ENCODE measurements at regions of chr11 and their contacts with region 1.

Region 1: GRCh38 chr11:6362873-6363678 is 27.2 kb upstream of the SMPD1 start:
- DNase-seq: peak; percentile 54
- H3K4me3 ChIP-seq: no peak overlapping the region
- H3K27ac ChIP-seq: no peak overlapping the region
- H3K27me3 ChIP-seq: no peaks in the 10 kb centered on the region
- CTCF ChIP-seq: peak; percentile 98

Region 2: GRCh38 chr11:5891216-5891800 is 471.8 kb before region 1 on chr11:
- CTCF ChIA-PET with region 1: interaction called, 11 read pairs
- POLR2A ChIA-PET with region 1: no interaction called
- DNase-seq: no peak
- H3K4me3 ChIP-seq: no peak overlapping the region
- H3K27ac ChIP-seq: no peak overlapping the region
- H3K27me3 ChIP-seq: no peaks in the 10 kb centered on the region
- CTCF ChIP-seq: peak; percentile 52

Region 3: DNA sequence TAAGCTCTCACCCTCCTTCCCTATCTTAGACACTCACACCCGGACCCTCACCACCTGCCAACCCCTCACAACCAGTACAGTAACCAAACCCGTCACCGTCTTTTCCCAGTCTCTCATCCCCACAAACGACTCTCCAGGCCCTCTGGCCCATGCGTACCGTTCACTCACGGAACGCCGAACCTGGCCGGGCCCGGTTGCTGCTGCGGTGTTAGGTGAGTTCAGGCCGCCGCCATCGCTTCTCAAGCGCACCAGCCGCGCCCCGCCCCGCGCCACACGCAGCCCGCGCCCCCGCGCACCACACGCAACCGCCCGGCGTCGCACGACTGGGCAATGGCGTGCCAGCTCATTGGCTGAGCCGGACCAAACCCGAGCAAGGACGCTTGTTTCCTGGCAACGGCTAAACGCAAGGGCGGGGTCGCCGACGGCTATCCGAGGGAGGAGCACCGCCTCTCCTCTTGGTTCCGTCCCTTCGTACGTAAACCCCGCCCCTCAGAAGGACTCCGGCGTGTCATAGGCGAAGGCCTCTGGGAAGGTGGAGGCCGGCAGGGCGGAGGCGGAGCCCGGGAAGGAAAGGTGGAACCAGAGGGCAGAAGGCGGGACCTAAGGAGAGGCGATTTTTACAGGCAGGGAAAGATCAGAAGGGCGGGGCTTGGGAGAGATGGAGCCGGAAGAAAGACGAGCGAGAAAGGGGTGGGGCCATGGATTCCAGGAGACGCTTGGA is 128.5 kb before region 1 on chr11 and contains the start of gene FHIP1B:
- CTCF ChIA-PET with region 1: interaction called, 24 read pairs
- POLR2A ChIA-PET with region 1: no interaction called
- DNase-seq: peak; percentile 100
- H3K4me3 ChIP-seq: peak within 1 kb of the TSS; percentile 99
- H3K27ac ChIP-seq: peak within 1 kb of the TSS; percentile 52
- H3K27me3 ChIP-seq: peaks cover 3% of the 10 kb centered on the region
- CTCF ChIP-seq: no peak
- polyA plus RNA-seq, gene FHIP1B: 18.9 and 19.8 TPM in 2 replicates

Region 4: DNA sequence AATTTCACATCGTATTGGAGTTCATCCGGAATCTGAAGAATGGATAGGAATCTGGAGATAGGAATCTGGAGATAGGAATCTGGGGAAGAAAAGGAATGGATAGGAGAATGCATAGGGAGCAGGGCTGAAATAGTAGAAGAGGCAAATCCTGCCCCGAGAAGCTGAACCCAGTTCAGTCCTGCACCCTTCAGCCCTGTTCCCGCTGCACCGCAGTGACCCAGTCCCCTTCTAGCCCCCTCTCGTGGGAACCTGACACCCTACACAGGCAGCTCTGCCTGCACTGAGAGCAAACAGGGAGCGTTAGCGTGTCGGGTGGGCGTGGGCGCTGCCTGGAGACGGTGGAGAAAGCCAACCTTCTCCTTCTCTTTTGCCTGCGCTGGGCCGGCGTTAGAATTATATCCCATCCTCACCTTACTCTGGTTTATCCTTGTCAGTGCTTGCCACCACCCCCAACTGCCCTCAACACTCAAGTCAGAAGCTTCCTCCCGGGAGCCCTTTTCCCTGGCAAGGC is 104.5 kb before region 1 on chr11:
- CTCF ChIA-PET with region 1: interaction called, 153 read pairs
- POLR2A ChIA-PET with region 1: no interaction called
- DNase-seq: no peak
- H3K4me3 ChIP-seq: no peak overlapping the region; the same call in 1 of the 2 replicates
- H3K27ac ChIP-seq: no peak overlapping the region
- H3K27me3 ChIP-seq: peaks cover 50% of the 10 kb centered on the region
- CTCF ChIP-seq: no peak

Region 5: GRCh38 chr11:6315811-6316425 is 47.2 kb before region 1 on chr11:
- CTCF ChIA-PET with region 1: interaction called, 137 read pairs
- POLR2A ChIA-PET with region 1: interaction called, 8 read pairs
- DNase-seq: no peak
- H3K4me3 ChIP-seq: no peak overlapping the region
- H3K27ac ChIP-seq: no peak overlapping the region
- H3K27me3 ChIP-seq: no peaks in the 10 kb centered on the region
- CTCF ChIP-seq: peak; percentile 92

Region 6: DNA sequence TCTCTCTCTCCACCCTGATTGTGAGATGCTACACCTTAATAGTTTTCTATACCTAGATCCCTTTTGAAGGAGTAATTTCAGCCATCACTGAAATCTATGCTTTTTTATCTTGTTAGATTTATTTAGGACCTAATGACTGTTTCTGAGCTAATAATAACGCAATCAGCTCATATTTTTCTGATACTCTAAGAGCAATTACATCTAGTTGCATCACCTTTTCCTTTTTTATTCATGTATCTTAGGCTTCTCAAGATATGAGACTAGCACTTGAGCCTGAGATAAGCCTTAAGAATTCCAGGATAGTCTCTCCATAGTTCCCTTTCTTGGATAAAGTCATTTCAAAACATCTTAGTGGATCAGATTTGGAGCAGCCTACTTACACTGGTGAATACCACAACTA is 17.7 kb before region 1 on chr11:
- CTCF ChIA-PET with region 1: interaction called, 123 read pairs
- POLR2A ChIA-PET with region 1: no interaction called
- DNase-seq: no peak
- H3K4me3 ChIP-seq: no peak overlapping the region
- H3K27ac ChIP-seq: no peak overlapping the region
- H3K27me3 ChIP-seq: peaks cover 6% of the 10 kb centered on the region
- CTCF ChIP-seq: no peak

Region 7: GRCh38 chr11:6612213-6613041 is 249.4 kb after region 1 on chr11 and contains the start of gene TAF10:
- CTCF ChIA-PET with region 1: no interaction called
- POLR2A ChIA-PET with region 1: no interaction called
- DNase-seq: peak; percentile 88
- H3K4me3 ChIP-seq: peak within 1 kb of the TSS; percentile 74
- H3K27ac ChIP-seq: peak within 1 kb of the TSS; percentile 99
- H3K27me3 ChIP-seq: no peaks in the 10 kb centered on the region
- CTCF ChIP-seq: peak; percentile 57
- polyA plus RNA-seq, gene TAF10: 170 and 215 TPM in 2 replicates